Body of pancreas (tissue), 4 donors: ENCODE measurements at regions of chr9 and their contacts with region 1.

Region 1: GRCh38 chr9:35649431-35650345 is 1.0 kb downstream of the SIT1 start:
- DNase-seq: no peak
- ATAC-seq: no peak
- H3K4me3 ChIP-seq: no peak overlapping the region
- H3K27ac ChIP-seq: no peak overlapping the region
- H3K4me1 ChIP-seq: peaks cover 16% of the 10 kb centered on the region
- H3K27me3 ChIP-seq: no peaks in the 10 kb centered on the region
- CTCF ChIP-seq: no peak
- POLR2A ChIP-seq: no peak

Region 2: DNA sequence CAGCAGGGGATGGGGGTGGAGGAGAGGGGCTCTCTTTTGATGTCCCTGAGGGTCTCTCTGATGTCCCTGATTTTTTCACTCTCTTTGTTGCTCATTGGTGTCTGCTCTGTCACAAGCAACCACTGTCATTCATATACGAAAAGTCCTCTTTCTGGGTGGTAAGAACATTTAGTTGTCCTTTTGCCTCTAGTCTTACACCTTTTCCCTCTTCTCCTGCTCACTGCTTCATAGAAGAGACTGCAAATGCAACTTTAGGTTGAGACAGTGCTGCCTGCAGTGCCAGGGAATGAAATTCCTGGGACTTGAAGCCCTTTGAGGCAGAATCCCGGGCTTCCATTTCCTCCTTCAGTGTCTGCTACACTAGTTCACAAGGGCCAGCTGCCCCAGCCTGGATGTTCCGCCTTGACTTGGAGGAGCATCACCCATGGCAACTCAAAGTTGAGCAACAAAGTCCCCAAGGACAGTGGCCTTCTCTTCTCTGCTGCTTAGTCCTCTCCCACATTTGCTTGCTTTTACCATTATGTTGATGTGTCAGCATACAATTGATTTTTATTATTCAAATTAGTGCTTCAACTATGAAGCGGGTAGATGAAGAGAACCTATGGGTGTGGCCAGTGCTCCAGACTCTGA is 254.5 kb before region 1 on chr9:
- intact Hi-C with region 1: no loop called
- DNase-seq: no peak
- ATAC-seq: no peak
- H3K4me3 ChIP-seq: no peak overlapping the region
- H3K27ac ChIP-seq: no peak overlapping the region
- H3K4me1 ChIP-seq: no peaks in the 10 kb centered on the region
- H3K27me3 ChIP-seq: no peaks in the 10 kb centered on the region
- CTCF ChIP-seq: no peak
- POLR2A ChIP-seq: no peak

Region 3: GRCh38 chr9:35697486-35697885 is 47.8 kb after region 1 on chr9:
- intact Hi-C with region 1: no loop called
- DNase-seq: no peak
- ATAC-seq: no peak
- H3K4me3 ChIP-seq: no peak overlapping the region
- H3K27ac ChIP-seq: peak overlapping the region in 2 of 4 donors; percentile 53 to 73
- H3K4me1 ChIP-seq: peaks cover 28% of the 10 kb centered on the region
- H3K27me3 ChIP-seq: no peaks in the 10 kb centered on the region
- CTCF ChIP-seq: no peak
- POLR2A ChIP-seq: no peak

Region 4: GRCh38 chr9:35732122-35732799 is 82.6 kb after region 1 on chr9 and contains the starts of genes CREB3 and TLN1:
- intact Hi-C with region 1: loop called (anchors 5 kb)
- DNase-seq: peak; percentile 96 to 98 (median 97)
- ATAC-seq: peak; percentile 90
- H3K4me3 ChIP-seq: peak within 1 kb of the TSS; percentile 50 to 73
- H3K27ac ChIP-seq: peak within 1 kb of the TSS; percentile 71 to 95 (median 92)
- H3K4me1 ChIP-seq: peaks cover 51% of the 10 kb centered on the region
- H3K27me3 ChIP-seq: no peaks in the 10 kb centered on the region
- CTCF ChIP-seq: peak in 2 of 7 experiments; percentile 11 to 29
- POLR2A ChIP-seq: peak; percentile 64 to 83 (median 82)
- total RNA-seq, gene CREB3: 31.9 to 32.6 TPM
- total RNA-seq, gene TLN1: 93.7 to 130 TPM